CD4-positive, alpha-beta T cell (primary cell): ENCODE measurements at regions of chr19 and their contacts with region 1.

Region 1: DNA sequence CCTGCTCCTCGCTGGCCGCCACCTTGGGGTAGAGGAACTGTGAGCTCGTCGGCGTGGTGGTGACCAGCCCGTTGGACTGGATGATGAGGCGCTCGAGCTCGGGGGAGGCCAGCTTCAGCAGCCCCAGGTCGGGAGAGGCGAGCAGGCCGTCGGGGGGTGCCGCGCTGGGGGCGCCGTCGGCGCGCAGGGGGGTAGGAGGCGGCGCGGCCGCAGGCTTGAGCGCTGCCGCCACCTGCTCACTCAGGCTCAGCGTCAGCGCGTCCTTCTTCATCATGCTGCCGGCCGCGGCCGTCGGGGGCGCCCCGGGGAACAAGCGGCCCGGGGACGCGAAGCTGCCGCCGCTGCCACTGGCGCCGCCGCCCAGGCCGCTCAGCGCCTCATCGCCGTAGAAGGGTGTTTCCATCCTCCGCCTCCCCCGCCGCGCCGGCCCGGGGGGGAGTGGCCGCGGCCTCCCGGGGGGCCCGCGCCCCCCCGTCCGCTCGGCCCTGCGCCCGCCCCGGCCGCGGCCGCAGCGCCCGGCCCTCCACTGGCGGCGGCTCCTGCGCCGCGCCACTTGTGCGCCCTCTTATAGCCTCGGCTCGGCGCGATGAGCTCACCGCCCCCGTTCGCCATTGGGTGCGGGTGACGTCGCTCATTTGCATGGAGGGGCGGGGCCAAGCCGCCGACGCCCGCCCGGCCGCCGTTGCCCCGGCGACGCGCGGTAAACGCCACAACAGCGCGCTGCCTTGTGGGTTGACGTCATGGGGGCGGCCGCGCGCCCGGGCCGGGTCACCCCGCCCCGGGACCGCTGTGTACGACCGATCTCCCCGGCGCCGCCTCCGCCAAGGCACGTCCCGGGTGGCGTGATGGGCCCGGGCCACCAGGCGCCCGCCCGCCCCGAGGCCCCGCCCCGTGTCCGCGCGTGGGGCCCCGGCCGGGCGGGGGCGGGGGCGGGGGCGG is at the start of gene JUND:
- DNase-seq: peak; percentile 92 to 100 (median 97)
- ATAC-seq: peak; percentile 63
- H3K4me3 ChIP-seq: peak within 1 kb of the TSS; percentile 99
- H3K4me3 Mint-ChIP-seq: peak within 1 kb of the TSS; percentile 99
- H3K27ac ChIP-seq: peak within 1 kb of the TSS; percentile 99
- H3K27ac Mint-ChIP-seq: peak within 1 kb of the TSS; percentile 100
- H3K4me1 ChIP-seq: peaks cover 65% of the 10 kb centered on the region
- H3K4me1 Mint-ChIP-seq: peaks cover 58% of the 10 kb centered on the region
- H3K27me3 ChIP-seq: no peaks in the 10 kb centered on the region
- H3K27me3 Mint-ChIP-seq: peaks cover 9% of the 10 kb centered on the region
- CTCF ChIP-seq: no peak
- total RNA-seq, gene JUND: 1,827 to 1,976 TPM

Region 2: DNA sequence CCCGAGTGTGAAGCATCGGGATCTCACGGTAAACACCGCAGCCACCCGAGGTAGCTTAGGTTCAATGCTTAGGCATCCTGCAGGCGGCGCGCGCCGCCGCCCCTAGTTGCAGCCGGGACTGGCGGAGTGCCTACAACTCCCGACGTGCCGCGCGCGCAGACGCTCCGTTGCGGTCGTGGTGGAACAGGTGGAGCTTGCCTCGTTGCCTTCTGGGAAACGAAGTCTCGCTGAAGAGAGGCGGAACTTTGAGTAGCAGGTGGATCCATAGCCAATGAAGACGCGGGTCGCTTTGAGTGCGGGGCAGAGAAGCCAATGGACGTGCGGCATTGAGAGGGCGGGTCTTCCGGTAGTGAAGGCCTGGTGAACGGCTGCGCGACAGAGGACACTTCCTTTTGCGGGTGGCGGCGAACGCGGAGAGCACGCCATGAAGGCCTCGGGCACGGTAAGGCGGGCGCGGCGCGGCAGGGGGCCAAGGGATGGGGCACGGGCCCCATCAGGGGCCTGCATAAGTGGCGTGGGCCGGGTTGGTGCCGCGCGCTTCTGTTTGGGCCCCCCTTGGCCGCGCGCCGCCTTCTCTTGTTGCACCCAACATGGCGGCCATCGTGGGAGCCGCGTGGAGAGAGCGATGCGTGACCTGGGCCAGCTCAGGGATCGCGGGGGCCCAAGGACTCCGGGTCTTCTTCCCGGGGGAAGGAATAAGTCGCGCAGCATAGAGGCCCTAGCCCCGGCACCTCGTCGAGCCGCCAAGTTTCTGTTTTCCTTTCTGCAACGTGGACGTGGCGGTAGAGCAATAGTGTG is 421.6 kb before region 1 on chr19 and contains the start of gene RPL18A:
- CTCF ChIA-PET with region 1: interaction called, 3 read pairs
- POLR2A ChIA-PET with region 1: interaction called, 16 read pairs
- intact Hi-C with region 1: no loop called
- DNase-seq: peak; percentile 96 to 100 (median 99)
- ATAC-seq: peak; percentile 95
- H3K4me3 ChIP-seq: peak within 1 kb of the TSS; percentile 86
- H3K4me3 Mint-ChIP-seq: peak within 1 kb of the TSS; percentile 100
- H3K27ac ChIP-seq: peak within 1 kb of the TSS; percentile 1 to 71
- H3K27ac Mint-ChIP-seq: peak within 1 kb of the TSS; percentile 88
- H3K4me1 ChIP-seq: peaks cover 37% of the 10 kb centered on the region
- H3K4me1 Mint-ChIP-seq: peaks cover 33% of the 10 kb centered on the region
- H3K27me3 ChIP-seq: no peaks in the 10 kb centered on the region
- H3K27me3 Mint-ChIP-seq: no peaks in the 10 kb centered on the region
- CTCF ChIP-seq: peak; percentile 82
- total RNA-seq, gene RPL18A: 4,157 to 4,260 TPM

Region 3: DNA sequence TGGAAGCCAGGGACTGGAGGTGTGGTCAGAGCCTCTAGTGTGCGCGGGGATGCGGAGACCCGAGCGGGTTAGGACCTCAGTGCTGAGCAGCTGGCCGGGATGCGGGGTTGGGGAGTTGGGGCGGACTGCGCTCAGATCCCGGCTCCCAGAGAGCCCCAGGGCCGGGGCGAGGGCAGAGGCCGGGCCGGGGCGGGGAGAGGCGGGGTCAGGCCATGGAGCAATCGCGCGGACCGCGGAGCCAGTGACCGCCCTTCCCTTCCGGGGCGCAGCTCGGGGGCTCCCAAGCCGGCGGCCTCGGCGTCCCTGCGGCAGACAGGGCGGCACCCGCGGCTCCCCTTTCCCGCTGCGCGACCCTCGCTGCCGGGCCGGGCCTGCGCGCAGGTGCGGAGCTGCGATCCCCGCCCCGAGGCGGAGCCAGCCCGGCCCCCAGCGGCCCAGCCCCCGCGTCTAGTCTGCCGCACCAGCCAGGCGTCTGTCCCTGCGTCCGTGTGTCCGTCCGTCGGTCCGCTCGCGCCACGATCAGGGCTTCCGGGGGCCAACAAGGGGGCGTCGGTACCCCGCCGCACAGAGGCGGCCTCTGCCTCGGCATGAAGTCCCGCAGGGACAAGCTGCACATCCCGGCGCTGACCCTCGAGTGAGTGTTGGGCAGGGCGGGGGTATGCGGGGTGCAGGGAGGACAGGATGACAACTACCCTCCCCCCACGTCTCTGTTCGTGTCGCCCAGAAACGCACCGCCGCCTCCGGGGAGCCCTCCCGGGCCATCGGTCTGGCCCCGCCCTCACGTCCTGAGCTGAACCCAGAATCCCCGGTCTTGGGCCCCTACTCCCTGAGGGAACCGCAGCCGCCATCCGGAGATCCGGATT is 171.4 kb before region 1 on chr19:
- CTCF ChIA-PET with region 1: no interaction called
- POLR2A ChIA-PET with region 1: interaction called, 10 read pairs
- intact Hi-C with region 1: no loop called
- DNase-seq: peak in 10 of 14 experiments; percentile 21 to 69 (median 52)
- ATAC-seq: peak; percentile 77
- H3K4me3 ChIP-seq: peak overlapping the region; percentile 65
- H3K4me3 Mint-ChIP-seq: peak overlapping the region; percentile 86
- H3K27ac ChIP-seq: peak overlapping the region in 1 of 2 donors; percentile 29
- H3K27ac Mint-ChIP-seq: peak overlapping the region; percentile 73
- H3K4me1 ChIP-seq: peaks cover 36% of the 10 kb centered on the region
- H3K4me1 Mint-ChIP-seq: peaks cover 26% of the 10 kb centered on the region
- H3K27me3 ChIP-seq: no peaks in the 10 kb centered on the region
- H3K27me3 Mint-ChIP-seq: no peaks in the 10 kb centered on the region
- CTCF ChIP-seq: no peak

Region 4: GRCh38 chr19:18192673-18193387 is 88.5 kb before region 1 on chr19 and contains the start of gene MPV17L2:
- CTCF ChIA-PET with region 1: interaction called, 10 read pairs
- POLR2A ChIA-PET with region 1: interaction called, 73 read pairs
- intact Hi-C with region 1: no loop called
- DNase-seq: peak; percentile 94 to 100 (median 98)
- ATAC-seq: peak; percentile 87
- H3K4me3 ChIP-seq: peak within 1 kb of the TSS; percentile 92
- H3K4me3 Mint-ChIP-seq: peak within 1 kb of the TSS; percentile 90
- H3K27ac ChIP-seq: peak within 1 kb of the TSS; percentile 73 to 82
- H3K27ac Mint-ChIP-seq: peak within 1 kb of the TSS; percentile 81
- H3K4me1 ChIP-seq: peaks cover 30% of the 10 kb centered on the region
- H3K4me1 Mint-ChIP-seq: peaks cover 29% of the 10 kb centered on the region
- H3K27me3 ChIP-seq: no peaks in the 10 kb centered on the region
- H3K27me3 Mint-ChIP-seq: no peaks in the 10 kb centered on the region
- CTCF ChIP-seq: no peak
- total RNA-seq, gene MPV17L2: 2.8 to 3.9 TPM

Region 5: DNA sequence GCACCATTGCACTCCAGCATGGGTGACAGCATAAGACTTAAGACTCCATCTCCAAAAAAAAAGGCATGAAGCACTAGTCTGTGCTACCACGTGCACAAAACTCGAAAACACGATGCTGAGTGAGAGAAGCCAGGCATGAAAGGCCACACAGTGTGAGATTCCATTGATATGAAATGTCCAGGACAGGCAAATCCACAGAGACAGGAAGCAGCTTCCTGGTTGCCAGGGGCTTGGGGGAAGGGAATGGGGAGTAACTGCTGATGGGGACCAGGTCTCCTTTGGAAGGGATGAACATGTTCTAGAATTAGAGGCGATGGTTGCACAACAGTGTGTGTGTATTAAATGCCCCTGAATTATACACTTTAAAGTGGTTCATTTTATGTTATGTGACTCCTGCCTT is 16.0 kb after region 1 on chr19:
- CTCF ChIA-PET with region 1: interaction called, 78 read pairs
- POLR2A ChIA-PET with region 1: interaction called, 465 read pairs
- intact Hi-C with region 1: no loop called
- DNase-seq: no peak
- ATAC-seq: no peak
- H3K4me3 ChIP-seq: no peak overlapping the region
- H3K4me3 Mint-ChIP-seq: no peak overlapping the region
- H3K27ac ChIP-seq: no peak overlapping the region
- H3K27ac Mint-ChIP-seq: peak overlapping the region; percentile 24
- H3K4me1 ChIP-seq: peaks cover 50% of the 10 kb centered on the region
- H3K4me1 Mint-ChIP-seq: peaks cover 30% of the 10 kb centered on the region
- H3K27me3 ChIP-seq: no peaks in the 10 kb centered on the region
- H3K27me3 Mint-ChIP-seq: no peaks in the 10 kb centered on the region
- CTCF ChIP-seq: no peak

Region 6: GRCh38 chr19:18328340-18329034 is 47.1 kb after region 1 on chr19:
- CTCF ChIA-PET with region 1: interaction called, 340 read pairs
- POLR2A ChIA-PET with region 1: interaction called, 761 read pairs
- intact Hi-C with region 1: loop called (anchors 1 kb)
- DNase-seq: peak; percentile 76 to 94 (median 82)
- ATAC-seq: peak; percentile 99
- H3K4me3 ChIP-seq: peak overlapping the region; percentile 31
- H3K4me3 Mint-ChIP-seq: peak overlapping the region; percentile 47
- H3K27ac ChIP-seq: no peak overlapping the region
- H3K27ac Mint-ChIP-seq: peak overlapping the region; percentile 6
- H3K4me1 ChIP-seq: peaks cover 24% of the 10 kb centered on the region
- H3K4me1 Mint-ChIP-seq: peaks cover 17% of the 10 kb centered on the region
- H3K27me3 ChIP-seq: no peaks in the 10 kb centered on the region
- H3K27me3 Mint-ChIP-seq: no peaks in the 10 kb centered on the region
- CTCF ChIP-seq: peak; percentile 92

Region 7: DNA sequence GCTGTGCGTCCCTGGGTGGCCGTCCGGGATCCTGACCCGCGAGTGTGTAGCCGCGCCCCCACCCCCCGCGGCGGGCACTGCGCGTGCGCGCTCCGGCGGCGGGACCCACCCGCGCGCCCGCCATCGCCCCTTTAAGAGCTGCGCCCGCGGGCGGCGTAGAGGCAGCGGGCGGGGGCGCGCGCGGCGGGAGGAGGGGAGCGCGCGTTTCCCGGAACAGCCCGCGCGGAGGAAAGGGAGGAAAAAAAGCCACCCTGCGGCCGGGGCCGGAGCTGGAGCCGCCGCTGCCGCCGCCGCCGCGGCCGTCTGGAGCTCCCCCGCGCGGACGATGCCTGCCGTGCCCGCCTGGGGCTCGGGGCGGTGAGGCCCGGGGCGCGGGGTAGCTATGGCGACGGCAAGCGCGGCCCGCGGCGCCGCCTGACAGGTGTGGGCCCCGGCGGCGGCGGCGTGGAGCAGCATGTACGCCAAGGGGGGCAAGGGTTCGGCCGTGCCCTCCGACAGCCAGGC is 137.9 kb after region 1 on chr19 and contains the start of gene SSBP4:
- CTCF ChIA-PET with region 1: interaction called, 8 read pairs
- POLR2A ChIA-PET with region 1: interaction called, 97 read pairs
- intact Hi-C with region 1: no loop called
- DNase-seq: peak in 13 of 14 experiments; percentile 45 to 90 (median 63)
- ATAC-seq: peak; percentile 58
- H3K4me3 ChIP-seq: peak within 1 kb of the TSS; percentile 77
- H3K4me3 Mint-ChIP-seq: peak within 1 kb of the TSS; percentile 92
- H3K27ac ChIP-seq: peak within 1 kb of the TSS; percentile 41 to 52
- H3K27ac Mint-ChIP-seq: peak within 1 kb of the TSS; percentile 81
- H3K4me1 ChIP-seq: peaks cover 94% of the 10 kb centered on the region
- H3K4me1 Mint-ChIP-seq: peaks cover 85% of the 10 kb centered on the region
- H3K27me3 ChIP-seq: peaks cover 11 to 30% of the 10 kb centered on the region in 2 experiments
- H3K27me3 Mint-ChIP-seq: peaks cover 38% of the 10 kb centered on the region
- CTCF ChIP-seq: no peak
- total RNA-seq, gene SSBP4: 44.0 to 50.9 TPM